ENCODE measurements at regions of chr6 and their contacts with region 1.

Region 1: GRCh38 chr6:124870611-124871459 is 91.4 kb upstream of the RNF217 start:
- DNase-seq: peak; percentile 46
- H3K4me3 ChIP-seq: no peak overlapping the region
- H3K27ac ChIP-seq: no peak overlapping the region
- H3K4me1 ChIP-seq: no peaks in the 10 kb centered on the region
- H3K27me3 ChIP-seq: no peaks in the 10 kb centered on the region
- CTCF ChIP-seq: peak; percentile 31 to 51
- POLR2A ChIP-seq: no peak

Region 2: GRCh38 chr6:125020385-125020784 is 149.6 kb after region 1 on chr6:
- CTCF ChIA-PET with region 1: no interaction called
- POLR2A ChIA-PET with region 1: no interaction called
- dilution Hi-C with region 1: no loop called
- intact Hi-C with region 1: loop called (anchors 10 kb)
- DNase-seq: no peak
- H3K4me3 ChIP-seq: no peak overlapping the region
- H3K27ac ChIP-seq: no peak overlapping the region
- H3K4me1 ChIP-seq: peaks cover 11% of the 10 kb centered on the region
- H3K27me3 ChIP-seq: no peaks in the 10 kb centered on the region
- CTCF ChIP-seq: no peak
- POLR2A ChIP-seq: no peak

Region 3: GRCh38 chr6:125114248-125114858 is 243.5 kb after region 1 on chr6:
- CTCF ChIA-PET with region 1: interaction called, 259 read pairs
- POLR2A ChIA-PET with region 1: no interaction called
- dilution Hi-C with region 1: loop called (anchors 25 kb)
- intact Hi-C with region 1: loop called (anchors 1 kb)
- DNase-seq: peak; percentile 69
- H3K4me3 ChIP-seq: no peak overlapping the region
- H3K27ac ChIP-seq: no peak overlapping the region
- H3K4me1 ChIP-seq: no peaks in the 10 kb centered on the region
- H3K27me3 ChIP-seq: no peaks in the 10 kb centered on the region
- CTCF ChIP-seq: peak; percentile 49 to 50
- POLR2A ChIP-seq: no peak

Region 4: GRCh38 chr6:125191916-125192609 is 321.2 kb after region 1 on chr6:
- CTCF ChIA-PET with region 1: interaction called, 17 read pairs
- POLR2A ChIA-PET with region 1: no interaction called
- dilution Hi-C with region 1: no loop called
- intact Hi-C with region 1: no loop called
- DNase-seq: peak; percentile 73
- H3K4me3 ChIP-seq: no peak overlapping the region
- H3K27ac ChIP-seq: no peak overlapping the region
- H3K4me1 ChIP-seq: no peaks in the 10 kb centered on the region
- H3K27me3 ChIP-seq: no peaks in the 10 kb centered on the region
- CTCF ChIP-seq: peak; percentile 70 to 76
- POLR2A ChIP-seq: no peak

Region 5: DNA sequence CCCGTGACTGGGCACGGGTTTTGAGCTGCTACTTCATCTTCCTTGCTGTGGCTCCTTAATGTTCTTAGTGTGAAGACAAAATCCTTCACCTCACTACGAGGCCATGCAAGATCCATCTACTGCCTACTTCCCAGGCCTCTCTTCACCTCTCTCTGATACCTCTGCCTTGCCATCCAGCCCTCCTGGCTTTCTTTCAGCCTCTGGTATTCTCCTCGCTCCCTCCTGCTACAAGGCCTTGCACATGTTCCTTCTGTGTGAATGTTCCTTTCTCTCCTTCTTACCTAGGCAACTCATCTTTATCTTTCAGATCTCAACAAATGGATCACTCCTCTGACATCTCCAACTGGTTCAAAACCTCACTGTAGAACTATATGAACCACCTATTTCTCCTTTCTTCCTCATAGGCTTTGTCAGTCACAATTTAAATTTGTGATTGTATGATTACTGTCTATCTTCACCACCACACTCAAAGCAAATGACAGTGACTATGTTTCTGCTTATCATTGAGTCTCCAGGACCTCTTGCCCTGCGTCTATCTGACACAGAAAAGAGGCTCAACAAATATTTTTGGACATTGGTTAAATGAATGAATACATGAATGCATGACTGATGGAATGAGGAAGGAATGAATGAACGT is 898.4 kb after region 1 on chr6:
- CTCF ChIA-PET with region 1: interaction called, 7 read pairs
- POLR2A ChIA-PET with region 1: no interaction called
- dilution Hi-C with region 1: no loop called
- intact Hi-C with region 1: loop called (anchors 2 kb)
- DNase-seq: no peak
- H3K4me3 ChIP-seq: no peak overlapping the region
- H3K27ac ChIP-seq: no peak overlapping the region
- H3K4me1 ChIP-seq: no peaks in the 10 kb centered on the region
- H3K27me3 ChIP-seq: peaks cover 4 to 19% of the 10 kb centered on the region in 2 experiments
- CTCF ChIP-seq: no peak
- POLR2A ChIP-seq: no peak

Measured in endothelial cell of umbilical vein (primary cell).